ENCODE measurements at regions of chr2 and their contacts with region 1.

Region 1: GRCh38 chr2:147910990-147911473 is 66.2 kb downstream of the ACVR2A start:
- DNase-seq: peak; percentile 84
- ATAC-seq: peak; percentile 37
- H3K4me3 ChIP-seq: no peak overlapping the region
- H3K27ac ChIP-seq: no peak overlapping the region
- H3K4me1 ChIP-seq: peaks cover 7% of the 10 kb centered on the region
- H3K27me3 ChIP-seq: no peaks in the 10 kb centered on the region
- CTCF ChIP-seq: peak; percentile 84

Region 2: DNA sequence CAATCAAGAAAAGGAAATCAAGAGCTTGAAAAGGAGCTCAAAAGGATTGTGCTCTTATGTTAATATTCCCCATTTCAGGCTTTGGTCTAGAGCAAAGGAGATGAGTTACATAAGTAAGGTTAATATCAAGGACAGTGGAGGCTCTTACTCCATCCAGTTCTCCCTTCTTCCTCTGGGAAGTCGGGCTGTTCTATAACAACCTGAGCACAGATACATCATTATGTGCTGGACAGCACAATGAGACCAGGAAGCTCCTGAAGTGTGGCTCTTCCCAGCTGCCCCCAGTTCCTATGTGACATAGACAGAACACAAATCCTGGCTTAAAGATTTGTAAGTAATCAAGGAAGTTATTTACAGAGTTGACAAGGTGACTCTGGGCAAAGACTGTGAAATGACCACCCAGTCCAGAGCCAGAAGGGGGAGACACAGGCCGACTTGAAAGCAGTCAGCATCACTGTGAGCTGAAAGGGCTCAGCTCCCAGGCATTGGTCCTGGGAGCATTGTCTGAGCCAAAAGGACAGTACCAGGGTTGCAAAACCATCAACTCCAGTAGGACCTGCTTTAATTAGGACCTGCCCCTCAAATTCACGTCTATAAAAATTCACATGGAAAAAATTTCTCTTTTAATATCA is 983.8 kb before region 1 on chr2:
- CTCF ChIA-PET with region 1: interaction called, 6 read pairs
- POLR2A ChIA-PET with region 1: no interaction called
- intact Hi-C with region 1: loop called (anchors 1 kb)
- DNase-seq: peak; percentile 73
- ATAC-seq: peak; percentile 97
- H3K4me3 ChIP-seq: no peak overlapping the region
- H3K27ac ChIP-seq: no peak overlapping the region
- H3K4me1 ChIP-seq: no peaks in the 10 kb centered on the region
- H3K27me3 ChIP-seq: no peaks in the 10 kb centered on the region
- CTCF ChIP-seq: peak; percentile 83

Region 3: DNA sequence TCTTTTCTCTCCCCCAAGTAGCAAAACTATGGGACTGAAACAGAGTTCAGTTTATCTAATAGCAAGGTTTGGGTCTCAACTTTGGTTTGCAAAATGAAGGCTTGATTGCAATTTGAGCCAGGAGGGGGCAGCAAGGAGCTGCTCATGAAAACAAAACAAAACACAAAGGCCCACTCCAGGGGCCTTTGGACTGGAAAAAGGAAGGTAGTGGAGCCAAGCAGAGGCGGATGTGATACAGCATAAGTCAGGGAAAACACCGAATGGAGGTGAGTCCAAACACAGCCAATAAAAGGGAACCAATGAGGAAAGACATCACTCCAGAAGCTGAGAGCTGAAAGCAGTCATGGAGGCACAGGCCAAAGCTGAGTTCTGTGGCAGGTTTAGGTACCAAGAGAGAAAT is 865.9 kb before region 1 on chr2:
- CTCF ChIA-PET with region 1: interaction called, 6 read pairs
- POLR2A ChIA-PET with region 1: no interaction called
- intact Hi-C with region 1: loop called (anchors 1 kb)
- DNase-seq: peak; percentile 79
- ATAC-seq: peak; percentile 68
- H3K4me3 ChIP-seq: no peak overlapping the region
- H3K27ac ChIP-seq: no peak overlapping the region
- H3K4me1 ChIP-seq: peaks cover 5% of the 10 kb centered on the region
- H3K27me3 ChIP-seq: no peaks in the 10 kb centered on the region
- CTCF ChIP-seq: peak; percentile 89

Region 4: DNA sequence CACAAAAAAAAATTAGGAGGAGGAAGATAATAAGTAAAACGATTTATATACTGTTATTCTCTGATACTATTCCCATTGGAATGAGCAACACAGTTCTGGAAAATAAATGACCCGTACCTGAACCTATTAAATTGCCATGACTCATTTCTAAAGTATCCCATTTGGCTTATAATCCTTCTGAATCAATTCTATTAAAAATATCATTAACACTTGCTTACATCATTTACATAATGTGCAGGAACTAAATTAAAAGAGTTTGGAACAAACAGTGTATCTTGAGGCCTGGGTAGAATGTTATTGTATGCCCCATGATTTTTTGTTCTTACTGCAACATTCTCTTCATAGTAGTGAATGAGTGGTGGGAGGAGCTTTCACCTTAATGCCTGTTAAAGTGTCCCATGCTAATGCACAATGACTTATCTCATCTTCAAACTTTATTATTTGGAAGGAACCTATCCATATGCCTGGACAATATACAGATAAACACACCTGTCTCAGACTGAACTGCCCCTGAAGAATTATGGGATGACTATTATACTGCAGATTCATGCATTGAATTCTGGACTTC is 616.1 kb before region 1 on chr2:
- CTCF ChIA-PET with region 1: no interaction called
- POLR2A ChIA-PET with region 1: no interaction called
- intact Hi-C with region 1: loop called (anchors 5 kb)
- DNase-seq: peak; percentile 77
- ATAC-seq: peak; percentile 81
- H3K4me3 ChIP-seq: no peak overlapping the region
- H3K27ac ChIP-seq: peak overlapping the region; percentile 59
- H3K4me1 ChIP-seq: peaks cover 18% of the 10 kb centered on the region
- H3K27me3 ChIP-seq: no peaks in the 10 kb centered on the region
- CTCF ChIP-seq: no peak

Region 5: GRCh38 chr2:147572622-147573021 is 338.4 kb before region 1 on chr2:
- CTCF ChIA-PET with region 1: no interaction called
- POLR2A ChIA-PET with region 1: no interaction called
- intact Hi-C with region 1: no loop called
- DNase-seq: peak; percentile 62
- ATAC-seq: no peak
- H3K4me3 ChIP-seq: no peak overlapping the region
- H3K27ac ChIP-seq: no peak overlapping the region
- H3K4me1 ChIP-seq: no peaks in the 10 kb centered on the region
- H3K27me3 ChIP-seq: no peaks in the 10 kb centered on the region
- CTCF ChIP-seq: no peak

Region 6: DNA sequence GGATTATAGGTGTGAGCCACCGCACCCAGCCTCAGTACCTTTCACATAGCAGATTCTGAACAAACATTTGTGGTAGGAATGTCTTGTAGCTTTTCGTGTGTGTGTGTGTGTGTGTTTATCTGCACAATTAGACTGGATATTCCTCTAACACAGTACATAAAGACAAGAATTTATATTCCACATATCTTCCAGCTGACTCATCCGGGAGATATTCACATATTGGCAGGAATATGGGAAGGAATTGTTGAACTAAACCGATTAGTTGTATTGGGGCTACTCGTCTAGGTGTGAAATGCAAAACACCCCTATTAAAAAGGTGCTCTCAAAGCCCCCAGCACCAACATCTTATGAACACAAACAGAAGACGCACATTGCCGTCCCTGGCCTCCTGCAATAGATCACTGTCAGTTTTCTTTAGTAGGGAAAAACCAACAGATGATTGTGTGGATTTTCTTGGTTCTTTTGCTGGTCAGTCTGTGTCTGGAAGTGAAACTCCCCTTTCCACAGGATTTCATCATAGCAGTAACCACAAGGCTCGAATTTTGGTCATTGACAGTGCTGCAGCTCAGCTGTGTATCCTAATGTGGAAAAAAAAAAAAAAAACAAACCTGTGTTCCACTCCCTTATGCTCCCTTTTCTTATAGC is 274.7 kb before region 1 on chr2:
- CTCF ChIA-PET with region 1: no interaction called
- POLR2A ChIA-PET with region 1: no interaction called
- intact Hi-C with region 1: loop called (anchors 5 kb)
- DNase-seq: peak; percentile 90
- ATAC-seq: peak; percentile 85
- H3K4me3 ChIP-seq: peak overlapping the region; percentile 26; the same call in 1 of the 2 replicates
- H3K27ac ChIP-seq: peak overlapping the region; percentile 39
- H3K4me1 ChIP-seq: peaks cover 25% of the 10 kb centered on the region
- H3K27me3 ChIP-seq: no peaks in the 10 kb centered on the region
- CTCF ChIP-seq: no peak

Region 7: GRCh38 chr2:147843864-147844696 is 67.0 kb before region 1 on chr2:
- CTCF ChIA-PET with region 1: interaction called, 9 read pairs
- POLR2A ChIA-PET with region 1: no interaction called
- intact Hi-C with region 1: loop called (anchors 2 kb)
- DNase-seq: peak; percentile 92
- ATAC-seq: peak; percentile 81
- H3K4me3 ChIP-seq: peak overlapping the region; percentile 94
- H3K27ac ChIP-seq: peak overlapping the region; percentile 80
- H3K4me1 ChIP-seq: peaks cover 29% of the 10 kb centered on the region
- H3K27me3 ChIP-seq: no peaks in the 10 kb centered on the region
- CTCF ChIP-seq: 0 out of 2 replicates have a peak, but pooled peaks have one; percentile 31

Region 8: GRCh38 chr2:147867050-147867449 is 44.0 kb before region 1 on chr2:
- CTCF ChIA-PET with region 1: no interaction called
- POLR2A ChIA-PET with region 1: no interaction called
- intact Hi-C with region 1: no loop called
- DNase-seq: no peak
- ATAC-seq: no peak
- H3K4me3 ChIP-seq: no peak overlapping the region
- H3K27ac ChIP-seq: no peak overlapping the region
- H3K4me1 ChIP-seq: peaks cover 14% of the 10 kb centered on the region; the same call in 1 of the 2 replicates
- H3K27me3 ChIP-seq: no peaks in the 10 kb centered on the region
- CTCF ChIP-seq: no peak

Region 9: GRCh38 chr2:148058641-148059040 is 147.6 kb after region 1 on chr2:
- CTCF ChIA-PET with region 1: no interaction called
- POLR2A ChIA-PET with region 1: no interaction called
- intact Hi-C with region 1: no loop called
- DNase-seq: no peak
- ATAC-seq: no peak
- H3K4me3 ChIP-seq: no peak overlapping the region
- H3K27ac ChIP-seq: no peak overlapping the region
- H3K4me1 ChIP-seq: no peaks in the 10 kb centered on the region
- H3K27me3 ChIP-seq: no peaks in the 10 kb centered on the region
- CTCF ChIP-seq: no peak